ENCODE measurements at regions of chr20 and their contacts with region 1.

Region 1: GRCh38 chr20:7305976-7306375 is 538.5 kb downstream of the BMP2 start:
- DNase-seq: no peak
- H3K4me3 Mint-ChIP-seq: no peak overlapping the region
- H3K27ac Mint-ChIP-seq: no peak overlapping the region
- H3K4me1 Mint-ChIP-seq: no peaks in the 10 kb centered on the region
- H3K27me3 Mint-ChIP-seq: no peaks in the 10 kb centered on the region

Region 2: GRCh38 chr20:7333841-7334240 is 27.9 kb after region 1 on chr20:
- intact Hi-C with region 1: loop called (anchors 1 kb)
- DNase-seq: no peak
- H3K4me3 Mint-ChIP-seq: no peak overlapping the region
- H3K27ac Mint-ChIP-seq: no peak overlapping the region
- H3K4me1 Mint-ChIP-seq: no peaks in the 10 kb centered on the region
- H3K27me3 Mint-ChIP-seq: no peaks in the 10 kb centered on the region

Region 3: GRCh38 chr20:7358670-7359069 is 52.7 kb after region 1 on chr20:
- intact Hi-C with region 1: no loop called
- DNase-seq: no peak
- H3K4me3 Mint-ChIP-seq: no peak overlapping the region
- H3K27ac Mint-ChIP-seq: no peak overlapping the region
- H3K4me1 Mint-ChIP-seq: no peaks in the 10 kb centered on the region
- H3K27me3 Mint-ChIP-seq: no peaks in the 10 kb centered on the region